HepG2 (cell line): ENCODE measurements at regions of chr9 and their contacts with region 1.

Region 1: DNA sequence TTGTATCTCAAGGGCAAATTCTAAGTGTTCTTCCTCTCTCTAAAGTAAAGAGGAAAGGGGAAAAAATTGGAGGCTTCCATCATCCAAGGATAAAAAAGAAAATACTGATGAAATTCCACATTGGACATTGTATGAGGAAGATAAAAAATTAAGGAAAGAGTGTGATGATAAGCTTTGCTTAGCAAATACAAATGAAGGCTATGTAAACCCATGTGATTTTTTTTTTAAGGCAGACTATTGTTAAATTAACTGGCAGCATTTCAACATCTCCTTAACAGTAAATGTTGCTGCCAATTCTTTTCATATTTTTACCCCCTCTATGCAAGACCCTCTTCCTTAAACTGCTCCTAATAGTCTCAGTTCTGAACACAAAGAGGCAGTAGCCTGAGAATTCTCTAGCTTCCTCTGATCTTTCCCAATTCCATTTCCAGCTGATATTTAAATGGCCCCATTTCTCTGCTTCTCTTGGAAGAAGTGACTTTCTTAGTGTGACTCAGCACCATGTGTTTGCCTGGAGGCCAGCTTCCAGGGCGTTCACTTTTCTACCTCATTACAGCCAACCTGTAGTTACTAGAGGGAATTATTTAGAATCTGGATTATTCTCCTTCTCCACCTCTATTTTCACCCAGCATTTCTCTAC is 159.7 kb downstream of the TLE1 start:
- DNase-seq: peak; percentile 25
- ATAC-seq: no peak; the same call in 2 of the 3 replicates
- H3K4me3 ChIP-seq: no peak overlapping the region
- H3K27ac ChIP-seq: no peak overlapping the region
- H3K4me1 ChIP-seq: peaks cover 39% of the 10 kb centered on the region
- H3K27me3 ChIP-seq: no peaks in the 10 kb centered on the region
- CTCF ChIP-seq: no peak
- EP300 ChIP-seq: 0 out of 4 replicates have a peak, but pooled peaks of 1 of the 2 experiments have one; percentile 5
- POLR2A ChIP-seq: no peak
- RAD21 ChIP-seq: no peak

Region 2: GRCh38 chr9:81848472-81848871 is 318.8 kb after region 1 on chr9:
- CTCF ChIA-PET with region 1: no interaction called
- POLR2A ChIA-PET with region 1: no interaction called
- in situ Hi-C with region 1: no loop called
- intact Hi-C with region 1: loop called (anchors 10 kb)
- DNase-seq: peak; percentile 7
- ATAC-seq: 0 out of 3 replicates have a peak, but pooled peaks have one; percentile 26
- H3K4me3 ChIP-seq: no peak overlapping the region
- H3K27ac ChIP-seq: no peak overlapping the region
- H3K4me1 ChIP-seq: peaks cover 30% of the 10 kb centered on the region
- H3K27me3 ChIP-seq: no peaks in the 10 kb centered on the region
- CTCF ChIP-seq: peak; percentile 47
- EP300 ChIP-seq: no peak
- POLR2A ChIP-seq: no peak
- RAD21 ChIP-seq: no peak